ENCODE measurements at regions of chr17 and their contacts with region 1.

Region 1: GRCh38 chr17:58344047-58344790 is 7.8 kb downstream of the SUPT4H1 start:
- DNase-seq: peak; percentile 95
- ATAC-seq: peak; percentile 85
- H3K4me3 ChIP-seq: peak overlapping the region; percentile 56 to 82 (median 62)
- H3K4me3 Mint-ChIP-seq: peak overlapping the region; percentile 88
- H3K27ac ChIP-seq: peak overlapping the region; percentile 98 to 99
- H3K27ac Mint-ChIP-seq: peak overlapping the region; percentile 94
- H3K4me1 ChIP-seq: peaks cover 72 to 73% of the 10 kb centered on the region in 2 donors
- H3K4me1 Mint-ChIP-seq: peaks cover 82% of the 10 kb centered on the region
- H3K27me3 ChIP-seq: no peaks in the 10 kb centered on the region
- H3K27me3 Mint-ChIP-seq: no peaks in the 10 kb centered on the region
- CTCF ChIP-seq: no peak

Region 2: DNA sequence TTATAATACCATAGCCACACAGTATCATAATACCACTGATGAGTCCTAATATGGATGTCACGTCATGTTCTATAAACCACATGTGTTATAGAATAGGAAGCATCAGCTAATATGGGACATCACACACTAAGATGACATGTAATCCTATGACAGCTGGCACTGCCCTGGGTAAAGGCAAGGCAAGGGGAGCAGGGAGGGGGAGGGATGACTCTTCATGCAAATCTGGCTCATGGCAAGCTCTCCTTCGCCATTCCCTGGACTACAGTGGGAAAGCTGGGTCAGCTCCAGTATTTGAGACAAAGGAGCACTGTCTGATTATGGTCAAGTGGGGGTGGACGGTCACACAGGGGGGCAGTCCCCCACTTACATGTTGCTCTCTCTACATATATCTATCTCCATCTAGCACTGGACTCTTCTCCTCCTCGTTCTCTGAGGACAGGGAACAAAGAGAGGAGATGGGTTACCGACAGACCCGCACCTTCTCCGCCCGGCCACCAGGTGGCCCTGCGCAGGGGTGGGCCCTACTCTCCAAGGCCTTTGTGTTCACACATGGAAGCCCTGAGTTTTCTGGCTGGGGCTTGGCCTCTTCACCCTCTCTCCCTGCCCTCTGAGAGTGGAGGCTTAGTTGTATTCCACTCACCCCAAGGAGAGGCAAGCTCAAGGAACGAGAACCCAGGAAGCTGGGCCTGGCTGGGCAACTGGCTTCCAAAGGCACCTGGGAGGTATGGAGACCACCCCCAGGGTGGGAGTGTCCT is 40.1 kb before region 1 on chr17:
- CTCF ChIA-PET with region 1: interaction called, 19 read pairs
- POLR2A ChIA-PET with region 1: interaction called, 3 read pairs
- intact Hi-C with region 1: no loop called
- DNase-seq: peak; percentile 70
- ATAC-seq: peak; percentile 91
- H3K4me3 ChIP-seq: no peak overlapping the region
- H3K4me3 Mint-ChIP-seq: no peak overlapping the region
- H3K27ac ChIP-seq: no peak overlapping the region
- H3K27ac Mint-ChIP-seq: peak overlapping the region; percentile 72
- H3K4me1 ChIP-seq: peaks cover 3 to 14% of the 10 kb centered on the region in 2 donors
- H3K4me1 Mint-ChIP-seq: peaks cover 11% of the 10 kb centered on the region
- H3K27me3 ChIP-seq: no peaks in the 10 kb centered on the region
- H3K27me3 Mint-ChIP-seq: no peaks in the 10 kb centered on the region
- CTCF ChIP-seq: peak; percentile 81

Region 3: GRCh38 chr17:58329035-58329809 is 15.0 kb before region 1 on chr17:
- CTCF ChIA-PET with region 1: interaction called, 587 read pairs
- POLR2A ChIA-PET with region 1: interaction called, 663 read pairs
- intact Hi-C with region 1: loop called (anchors 1 kb)
- DNase-seq: peak; percentile 88
- ATAC-seq: peak; percentile 37
- H3K4me3 ChIP-seq: peak overlapping the region; percentile 81 to 100 (median 99)
- H3K4me3 Mint-ChIP-seq: peak overlapping the region; percentile 91
- H3K27ac ChIP-seq: peak overlapping the region; percentile 73 to 85
- H3K27ac Mint-ChIP-seq: peak overlapping the region; percentile 93
- H3K4me1 ChIP-seq: peaks cover 36 to 69% of the 10 kb centered on the region in 2 donors
- H3K4me1 Mint-ChIP-seq: peaks cover 61% of the 10 kb centered on the region
- H3K27me3 ChIP-seq: no peaks in the 10 kb centered on the region
- H3K27me3 Mint-ChIP-seq: no peaks in the 10 kb centered on the region
- CTCF ChIP-seq: peak; percentile 79

Region 4: GRCh38 chr17:58541249-58541648 is 197.0 kb after region 1 on chr17:
- CTCF ChIA-PET with region 1: no interaction called
- POLR2A ChIA-PET with region 1: no interaction called
- intact Hi-C with region 1: no loop called
- DNase-seq: no peak
- ATAC-seq: no peak
- H3K4me3 ChIP-seq: no peak overlapping the region
- H3K4me3 Mint-ChIP-seq: no peak overlapping the region
- H3K27ac ChIP-seq: no peak overlapping the region
- H3K27ac Mint-ChIP-seq: no peak overlapping the region
- H3K4me1 ChIP-seq: no peaks in the 10 kb centered on the region
- H3K4me1 Mint-ChIP-seq: no peaks in the 10 kb centered on the region
- H3K27me3 ChIP-seq: peaks cover 0 to 11% (median 0%) of the 10 kb centered on the region in 4 experiments
- H3K27me3 Mint-ChIP-seq: peaks cover 18% of the 10 kb centered on the region
- CTCF ChIP-seq: peak; percentile 24